CD4-positive, alpha-beta memory T cell (primary cell): ENCODE measurements at regions of chr4 and their contacts with region 1.

Region 1: DNA sequence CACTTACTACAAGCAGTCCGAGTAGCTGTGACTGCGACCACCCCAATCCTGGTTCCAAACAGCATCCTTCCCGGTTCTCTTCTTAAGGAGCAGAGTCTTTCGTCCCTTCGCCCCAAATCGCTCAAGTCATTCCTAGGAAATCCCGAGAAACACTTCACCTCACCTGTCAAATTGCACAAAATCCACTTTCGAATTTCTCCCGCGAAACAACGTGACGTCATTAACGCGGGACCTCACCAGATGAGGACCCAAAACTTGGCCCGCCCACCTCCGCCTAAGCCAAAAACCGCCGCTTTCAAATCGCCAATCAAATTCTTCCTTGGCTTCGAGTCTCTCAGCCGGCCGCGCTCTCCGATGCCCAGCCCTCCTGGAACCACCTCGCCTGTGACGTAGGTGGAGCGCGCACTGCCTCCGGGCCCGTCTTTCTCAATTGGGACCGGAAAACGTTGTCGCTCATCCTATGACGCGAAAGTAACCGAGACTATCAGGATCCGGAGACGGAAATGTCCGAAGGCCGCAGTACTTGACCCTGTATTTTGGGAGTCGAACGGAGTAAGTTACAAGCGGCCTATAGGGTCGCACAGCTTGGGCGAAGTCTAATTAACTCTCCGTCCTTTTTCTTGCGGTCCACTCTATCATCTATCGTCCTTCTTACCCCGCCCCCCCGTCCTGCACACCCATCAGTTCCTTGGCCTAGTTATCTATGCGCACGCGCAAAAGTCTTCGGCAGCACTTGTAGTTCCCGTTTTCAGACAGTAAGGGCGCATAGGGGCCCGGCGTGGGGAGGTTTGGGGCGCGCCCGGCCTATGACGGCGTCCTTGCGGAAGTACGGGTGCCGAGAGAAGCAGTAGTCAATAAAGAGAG is at the starts of genes LARP7 and ZGRF1:
- DNase-seq: peak; percentile 99
- H3K4me3 ChIP-seq: peak within 1 kb of the TSS; percentile 71 to 96
- H3K4me3 Mint-ChIP-seq: peak within 1 kb of the TSS in 3 of 8 donors; percentile 2 to 39 (median 27)
- H3K27ac ChIP-seq: peak within 1 kb of the TSS; percentile 93
- H3K27ac Mint-ChIP-seq: peak within 1 kb of the TSS in 1 of 7 donors; percentile 53
- H3K4me1 ChIP-seq: peaks cover 23% of the 10 kb centered on the region
- H3K4me1 Mint-ChIP-seq: peaks cover 13 to 25% (median 22%) of the 10 kb centered on the region in 4 donors
- H3K27me3 ChIP-seq: no peaks in the 10 kb centered on the region
- H3K27me3 Mint-ChIP-seq: no peaks in the 10 kb centered on the region
- total RNA-seq, gene LARP7: 44.1 to 47.9 TPM
- total RNA-seq, gene ZGRF1: 6.2 to 7.6 TPM

Region 2: GRCh38 chr4:112145326-112145819 is 491.5 kb before region 1 on chr4 and contains the start of gene FAM241A:
- CTCF ChIA-PET with region 1: no interaction called
- POLR2A ChIA-PET with region 1: interaction called, 3 read pairs
- intact Hi-C with region 1: loop called (anchors 1 kb)
- DNase-seq: peak; percentile 86 to 89 (median 86)
- H3K4me3 ChIP-seq: peak within 1 kb of the TSS; percentile 82 to 88
- H3K4me3 Mint-ChIP-seq: peak within 1 kb of the TSS; percentile 87 to 99 (median 94)
- H3K27ac ChIP-seq: peak within 1 kb of the TSS; percentile 82
- H3K27ac Mint-ChIP-seq: peak within 1 kb of the TSS; percentile 85 to 99 (median 96)
- H3K4me1 ChIP-seq: peaks cover 29% of the 10 kb centered on the region
- H3K4me1 Mint-ChIP-seq: peaks cover 22 to 34% (median 26%) of the 10 kb centered on the region in 4 donors
- H3K27me3 ChIP-seq: no peaks in the 10 kb centered on the region
- H3K27me3 Mint-ChIP-seq: no peaks in the 10 kb centered on the region
- total RNA-seq, gene FAM241A: 2.7 TPM

Region 3: GRCh38 chr4:112284662-112285411 is 352.1 kb before region 1 on chr4:
- CTCF ChIA-PET with region 1: no interaction called
- POLR2A ChIA-PET with region 1: interaction called, 5 read pairs
- intact Hi-C with region 1: loop called (anchors 1 kb)
- DNase-seq: peak in 3 of 5 donors; percentile 15 to 22 (median 15)
- H3K4me3 ChIP-seq: peak overlapping the region; percentile 88 to 94
- H3K4me3 Mint-ChIP-seq: peak overlapping the region; percentile 92 to 98 (median 96)
- H3K27ac ChIP-seq: peak overlapping the region; percentile 79
- H3K27ac Mint-ChIP-seq: peak overlapping the region; percentile 91 to 99 (median 94)
- H3K4me1 ChIP-seq: peaks cover 85% of the 10 kb centered on the region
- H3K4me1 Mint-ChIP-seq: peaks cover 58 to 96% (median 75%) of the 10 kb centered on the region in 4 donors
- H3K27me3 ChIP-seq: no peaks in the 10 kb centered on the region
- H3K27me3 Mint-ChIP-seq: no peaks in the 10 kb centered on the region

Region 4: GRCh38 chr4:112585977-112586736 is 50.8 kb before region 1 on chr4:
- CTCF ChIA-PET with region 1: no interaction called
- POLR2A ChIA-PET with region 1: no interaction called
- intact Hi-C with region 1: no loop called
- DNase-seq: no peak
- H3K4me3 ChIP-seq: no peak overlapping the region
- H3K4me3 Mint-ChIP-seq: no peak overlapping the region
- H3K27ac ChIP-seq: no peak overlapping the region
- H3K27ac Mint-ChIP-seq: no peak overlapping the region
- H3K4me1 ChIP-seq: no peaks in the 10 kb centered on the region
- H3K4me1 Mint-ChIP-seq: no peaks in the 10 kb centered on the region
- H3K27me3 ChIP-seq: no peaks in the 10 kb centered on the region
- H3K27me3 Mint-ChIP-seq: no peaks in the 10 kb centered on the region

Region 5: DNA sequence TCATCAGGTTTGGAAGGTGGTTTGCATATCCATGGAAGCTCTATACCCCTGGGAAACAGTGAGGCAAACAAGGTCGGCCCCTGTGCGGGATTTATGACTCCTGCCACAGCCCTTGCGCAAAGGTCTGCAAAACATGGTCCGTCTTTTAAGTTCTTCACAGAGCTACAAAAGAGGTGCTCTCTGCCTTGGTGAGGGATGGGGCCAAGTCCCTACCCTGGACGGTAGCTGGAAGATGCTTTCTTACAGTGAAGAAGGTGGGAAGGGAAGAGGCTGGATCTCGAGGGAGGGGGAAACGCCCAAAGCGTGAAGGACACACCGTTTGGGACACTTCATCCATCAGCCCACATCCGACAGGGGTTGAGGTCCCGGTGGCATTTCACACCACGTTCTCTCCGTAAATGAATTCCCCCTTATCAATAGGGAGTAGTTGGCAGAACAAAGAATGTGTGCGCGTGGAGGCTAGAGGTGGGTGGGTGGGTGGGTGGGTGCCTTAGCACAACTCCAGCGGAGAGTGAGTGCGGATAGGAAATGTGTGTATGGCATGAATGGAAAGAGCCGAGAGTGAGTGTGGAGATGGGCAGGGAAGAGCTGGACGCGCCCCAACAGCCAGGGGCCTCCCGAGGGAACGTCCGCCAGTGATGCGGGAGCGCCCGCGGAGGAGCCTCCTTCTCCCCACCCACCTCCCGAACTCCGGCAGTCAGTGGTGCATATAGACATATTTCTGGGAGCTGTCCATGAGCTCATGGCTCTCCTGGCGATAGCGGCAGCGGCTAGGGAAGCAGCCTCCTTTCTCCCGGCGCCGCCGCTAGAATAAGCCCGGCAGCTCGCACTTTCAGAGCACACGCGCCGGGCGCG is 68.3 kb after region 1 on chr4:
- CTCF ChIA-PET with region 1: no interaction called
- POLR2A ChIA-PET with region 1: no interaction called
- intact Hi-C with region 1: loop called (anchors 5 kb)
- DNase-seq: peak in 1 of 5 donors; percentile 0
- H3K4me3 ChIP-seq: peak overlapping the region in 1 of 2 donors; percentile 41
- H3K4me3 Mint-ChIP-seq: peak overlapping the region; percentile 80 to 91 (median 86)
- H3K27ac ChIP-seq: no peak overlapping the region
- H3K27ac Mint-ChIP-seq: peak overlapping the region in 5 of 7 donors; percentile 33 to 90 (median 64)
- H3K4me1 ChIP-seq: peaks cover 17% of the 10 kb centered on the region
- H3K4me1 Mint-ChIP-seq: peaks cover 16 to 22% (median 19%) of the 10 kb centered on the region in 4 donors
- H3K27me3 ChIP-seq: peaks cover 17% of the 10 kb centered on the region
- H3K27me3 Mint-ChIP-seq: peaks cover 32 to 39% of the 10 kb centered on the region in 2 donors

Region 6: GRCh38 chr4:112938461-112939058 is 301.6 kb after region 1 on chr4:
- CTCF ChIA-PET with region 1: interaction called, 3 read pairs
- POLR2A ChIA-PET with region 1: no interaction called
- intact Hi-C with region 1: loop called (anchors 1 kb)
- DNase-seq: peak in 3 of 5 donors; percentile 1 to 11 (median 5)
- H3K4me3 ChIP-seq: no peak overlapping the region
- H3K4me3 Mint-ChIP-seq: no peak overlapping the region
- H3K27ac ChIP-seq: no peak overlapping the region
- H3K27ac Mint-ChIP-seq: no peak overlapping the region
- H3K4me1 ChIP-seq: no peaks in the 10 kb centered on the region
- H3K4me1 Mint-ChIP-seq: no peaks in the 10 kb centered on the region
- H3K27me3 ChIP-seq: no peaks in the 10 kb centered on the region
- H3K27me3 Mint-ChIP-seq: peaks cover 6 to 10% of the 10 kb centered on the region in 2 donors

Region 7: GRCh38 chr4:113555868-113556267 is 918.9 kb after region 1 on chr4:
- CTCF ChIA-PET with region 1: no interaction called
- POLR2A ChIA-PET with region 1: no interaction called
- intact Hi-C with region 1: no loop called
- DNase-seq: no peak
- H3K4me3 ChIP-seq: no peak overlapping the region
- H3K4me3 Mint-ChIP-seq: no peak overlapping the region
- H3K27ac ChIP-seq: no peak overlapping the region
- H3K27ac Mint-ChIP-seq: peak overlapping the region in 1 of 7 donors; percentile 12
- H3K4me1 ChIP-seq: no peaks in the 10 kb centered on the region
- H3K4me1 Mint-ChIP-seq: peaks cover 0 to 12% (median 4%) of the 10 kb centered on the region in 4 donors
- H3K27me3 ChIP-seq: no peaks in the 10 kb centered on the region
- H3K27me3 Mint-ChIP-seq: no peaks in the 10 kb centered on the region